A673 (cell line): ENCODE measurements at regions of chr15 and their contacts with region 1.

Region 1: GRCh38 chr15:92681141-92681631 is 25.6 kb upstream of the FAM174B start:
- DNase-seq: peak; percentile 50
- H3K4me3 ChIP-seq: no peak overlapping the region
- H3K27ac ChIP-seq: no peak overlapping the region
- H3K4me1 ChIP-seq: peaks cover 7% of the 10 kb centered on the region
- H3K27me3 ChIP-seq: no peaks in the 10 kb centered on the region
- CTCF ChIP-seq: no peak

Region 2: GRCh38 chr15:93974804-93975481 is 1293.8 kb after region 1 on chr15:
- CTCF ChIA-PET with region 1: interaction called, 10 read pairs
- POLR2A ChIA-PET with region 1: no interaction called
- intact Hi-C with region 1: no loop called
- DNase-seq: peak; percentile 58
- H3K4me3 ChIP-seq: no peak overlapping the region
- H3K27ac ChIP-seq: no peak overlapping the region
- H3K4me1 ChIP-seq: no peaks in the 10 kb centered on the region
- H3K27me3 ChIP-seq: no peaks in the 10 kb centered on the region
- CTCF ChIP-seq: peak; percentile 68